Activated CD4-positive, alpha-beta T cell treated with anti-CD3 and anti-CD28 coated beads, Interleukin-2, amount 10 ng/mL, durations not matched to agents 7 days and 5 days (primary cell): ENCODE measurements at regions of chr11 and their contacts with region 1.

Region 1: GRCh38 chr11:61384271-61385242 is 7.8 kb upstream of the TMEM216 start:
- DNase-seq: no peak
- H3K4me3 Mint-ChIP-seq: no peak overlapping the region
- H3K27ac Mint-ChIP-seq: no peak overlapping the region
- H3K4me1 Mint-ChIP-seq: peaks cover 5% of the 10 kb centered on the region
- H3K27me3 Mint-ChIP-seq: no peaks in the 10 kb centered on the region

Region 2: DNA sequence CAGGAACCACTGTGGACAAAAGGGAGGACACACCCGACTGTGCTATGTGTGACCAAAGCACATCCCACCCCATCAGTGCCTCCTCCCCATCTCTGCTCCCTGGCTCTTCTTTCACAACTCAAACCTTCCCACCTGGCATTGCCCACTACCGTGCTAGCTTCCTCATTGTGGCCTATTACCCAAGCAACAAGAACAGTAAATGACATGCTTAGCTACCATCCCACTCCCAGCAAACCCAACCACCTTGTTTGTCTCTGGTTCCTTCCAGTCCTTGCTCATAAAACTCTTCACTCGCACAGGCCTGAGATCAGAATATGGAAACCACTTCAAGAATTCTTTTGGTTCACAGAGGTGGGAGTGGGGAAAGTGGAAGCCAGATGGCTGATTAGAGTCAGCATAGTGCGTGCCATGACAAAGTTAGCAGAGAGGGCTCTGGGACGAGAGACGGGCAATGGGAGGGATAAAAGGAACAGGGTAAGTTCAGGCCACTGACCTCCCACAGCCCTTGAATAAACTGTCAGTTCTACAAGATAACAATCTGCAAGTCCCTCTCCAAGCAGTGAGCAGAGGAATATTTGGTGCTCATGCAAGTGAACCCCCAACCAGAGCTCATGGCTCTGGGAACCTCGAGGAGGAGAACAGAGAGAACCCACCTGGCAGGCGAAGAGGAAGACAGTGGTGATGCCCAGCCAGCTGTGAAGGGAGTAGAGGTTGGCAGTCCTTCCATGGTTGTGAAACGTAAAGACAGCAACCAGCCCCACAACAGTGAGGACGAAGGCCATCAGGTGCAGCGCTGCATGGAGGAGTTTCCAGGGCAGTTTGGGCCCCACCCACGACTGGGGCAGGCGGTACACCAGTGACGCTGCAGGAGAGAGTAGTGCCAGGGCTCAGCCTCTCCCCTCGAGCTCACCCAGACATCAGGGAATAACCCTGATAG is 31.2 kb before region 1 on chr11:
- CTCF ChIA-PET with region 1: interaction called, 24 read pairs
- POLR2A ChIA-PET with region 1: no interaction called
- DNase-seq: no peak
- H3K4me3 Mint-ChIP-seq: no peak overlapping the region
- H3K27ac Mint-ChIP-seq: no peak overlapping the region
- H3K4me1 Mint-ChIP-seq: peaks cover 11% of the 10 kb centered on the region
- H3K27me3 Mint-ChIP-seq: no peaks in the 10 kb centered on the region

Region 3: DNA sequence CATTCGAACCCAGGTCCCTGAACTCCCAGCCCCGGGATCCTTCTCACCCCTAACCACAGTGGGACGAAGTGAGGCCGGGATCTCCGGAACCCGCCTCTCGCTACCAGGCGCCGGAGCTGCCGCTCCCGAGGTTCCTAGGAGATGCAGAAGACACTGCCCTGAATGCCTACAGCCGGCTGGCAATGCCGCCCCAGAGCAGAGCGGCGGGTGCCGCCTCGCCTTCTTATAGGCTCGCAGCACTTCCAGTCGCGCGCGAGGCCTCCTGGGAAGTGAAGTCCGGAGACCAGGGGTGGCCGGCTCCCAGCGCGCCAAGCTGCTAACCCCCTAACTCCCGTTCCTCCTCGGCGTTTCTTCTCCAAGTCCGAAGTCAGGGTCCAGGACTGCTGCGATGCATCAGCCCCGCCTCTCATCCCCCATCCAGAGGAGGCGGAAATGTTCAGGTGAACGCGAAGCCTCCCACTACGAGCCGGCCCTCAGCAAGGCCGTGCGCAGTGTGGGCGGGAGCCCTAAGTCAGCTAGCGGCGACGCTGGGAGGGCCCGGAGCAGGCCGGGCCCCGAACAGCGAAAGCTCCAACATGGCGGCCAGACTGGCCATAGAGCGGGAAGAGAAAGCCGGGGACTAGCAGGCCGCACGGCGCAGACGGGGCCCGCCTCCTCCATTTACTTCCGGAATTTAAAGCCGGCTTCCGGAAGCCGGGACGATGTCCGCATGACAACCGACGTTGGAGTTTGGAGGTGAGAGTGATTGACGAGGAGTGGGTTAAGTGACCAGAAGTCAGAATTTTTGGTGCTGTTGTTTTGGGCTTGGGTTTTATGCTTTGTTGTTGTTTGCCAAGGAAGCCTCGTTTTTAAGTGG is 22.6 kb before region 1 on chr11 and contains the starts of genes CYB561A3 and TMEM138:
- CTCF ChIA-PET with region 1: interaction called, 23 read pairs
- POLR2A ChIA-PET with region 1: no interaction called
- DNase-seq: peak; percentile 93
- H3K4me3 Mint-ChIP-seq: peak within 1 kb of the TSS; percentile 100
- H3K27ac Mint-ChIP-seq: peak within 1 kb of the TSS; percentile 99
- H3K4me1 Mint-ChIP-seq: peaks cover 45% of the 10 kb centered on the region
- H3K27me3 Mint-ChIP-seq: no peaks in the 10 kb centered on the region
- total RNA-seq, gene CYB561A3: 49.4 to 59.6 TPM
- total RNA-seq, gene TMEM138: 52.0 to 60.4 TPM

Region 4: GRCh38 chr11:61369372-61370219 is 15.0 kb before region 1 on chr11:
- CTCF ChIA-PET with region 1: interaction called, 23 read pairs
- POLR2A ChIA-PET with region 1: no interaction called
- DNase-seq: no peak
- H3K4me3 Mint-ChIP-seq: no peak overlapping the region
- H3K27ac Mint-ChIP-seq: peak overlapping the region; percentile 5
- H3K4me1 Mint-ChIP-seq: peaks cover 12% of the 10 kb centered on the region
- H3K27me3 Mint-ChIP-seq: no peaks in the 10 kb centered on the region